HCT116 (cell line): ENCODE measurements at regions of chr16 and their contacts with region 1.

Region 1: DNA sequence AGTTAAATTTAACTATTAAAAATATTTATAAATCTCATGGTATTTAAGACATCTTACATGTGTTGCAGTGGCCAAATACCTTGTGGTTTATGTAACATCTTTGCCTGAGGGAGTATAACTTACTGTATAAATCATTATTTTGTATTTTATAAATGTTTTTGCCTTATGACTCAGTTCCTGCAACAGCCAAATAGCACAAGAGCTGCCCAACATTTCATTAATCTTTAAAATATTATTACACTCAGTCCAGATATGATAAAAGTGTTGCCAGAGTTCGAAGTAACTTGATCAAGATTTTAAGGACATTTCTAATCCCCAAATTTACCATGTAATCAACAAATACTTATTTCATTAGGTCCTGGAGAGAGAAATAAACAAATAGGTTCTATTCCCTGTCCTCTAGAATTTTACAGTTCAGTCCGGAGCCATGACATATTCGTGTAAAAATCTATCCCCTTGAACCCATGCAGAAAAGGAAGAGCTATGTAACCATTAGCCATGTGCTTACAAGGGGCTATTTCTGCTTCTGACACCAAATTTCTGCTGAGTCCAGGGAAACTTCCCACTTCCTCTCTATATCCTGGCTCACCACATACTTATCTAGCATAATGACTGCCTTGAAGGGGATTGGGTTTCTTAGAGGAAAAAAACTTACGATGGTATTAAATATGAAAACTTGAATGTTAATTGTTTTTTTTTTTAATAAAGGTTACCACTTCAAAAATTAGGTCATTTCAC is 44.0 kb downstream of the IRX6 start:
- DNase-seq: no peak
- ATAC-seq: no peak
- H3K4me3 ChIP-seq: no peak overlapping the region
- H3K27ac ChIP-seq: no peak overlapping the region
- H3K4me1 ChIP-seq: no peaks in the 10 kb centered on the region
- H3K27me3 ChIP-seq: peaks cover 74% of the 10 kb centered on the region
- CTCF ChIP-seq: no peak
- POLR2A ChIP-seq: no peak
- RAD21 ChIP-seq: no peak

Region 2: GRCh38 chr16:54890381-54890780 is 477.7 kb before region 1 on chr16:
- CTCF ChIA-PET with region 1: no interaction called
- POLR2A ChIA-PET with region 1: no interaction called
- RAD21 ChIA-PET with region 1: no interaction called
- intact Hi-C with region 1: no loop called
- DNase-seq: no peak
- ATAC-seq: no peak
- H3K4me3 ChIP-seq: no peak overlapping the region
- H3K27ac ChIP-seq: no peak overlapping the region
- H3K4me1 ChIP-seq: no peaks in the 10 kb centered on the region
- H3K27me3 ChIP-seq: no peaks in the 10 kb centered on the region
- CTCF ChIP-seq: no peak
- POLR2A ChIP-seq: no peak
- RAD21 ChIP-seq: no peak

Region 3: DNA sequence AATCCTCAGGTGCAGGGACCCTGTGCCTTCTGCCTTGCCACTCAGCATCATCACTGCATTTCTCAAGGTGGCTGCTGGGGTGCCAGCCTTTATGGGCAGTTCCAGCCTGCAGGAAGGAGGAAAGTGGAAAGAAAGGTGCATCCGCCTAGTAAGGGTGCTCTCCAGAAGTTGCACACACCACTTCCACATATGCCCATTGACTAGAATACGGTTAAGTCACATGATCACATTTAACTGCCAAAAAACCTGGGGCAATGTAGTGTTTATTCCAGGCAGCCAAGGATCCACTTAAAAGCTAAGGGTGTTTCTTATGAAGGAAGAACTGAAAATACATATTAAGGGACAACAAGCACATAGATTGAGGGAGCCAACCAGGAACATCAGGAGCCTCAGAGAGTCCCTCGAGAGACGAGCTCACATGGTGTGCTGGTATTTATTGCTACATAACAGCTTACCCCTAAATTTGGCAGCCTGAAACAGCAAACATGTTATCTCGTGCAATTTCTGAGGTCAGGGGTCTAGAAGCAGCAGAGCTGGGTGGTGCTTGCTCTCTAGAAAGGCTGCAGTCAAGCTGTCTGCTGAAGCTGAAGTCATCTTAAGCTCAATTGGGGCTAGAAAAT is 58.9 kb after region 1 on chr16:
- CTCF ChIA-PET with region 1: no interaction called
- POLR2A ChIA-PET with region 1: no interaction called
- RAD21 ChIA-PET with region 1: no interaction called
- intact Hi-C with region 1: no loop called
- DNase-seq: no peak
- ATAC-seq: no peak
- H3K4me3 ChIP-seq: no peak overlapping the region
- H3K27ac ChIP-seq: no peak overlapping the region
- H3K4me1 ChIP-seq: no peaks in the 10 kb centered on the region
- H3K27me3 ChIP-seq: peaks cover 68% of the 10 kb centered on the region
- CTCF ChIP-seq: no peak
- POLR2A ChIP-seq: no peak
- RAD21 ChIP-seq: no peak

Region 4: GRCh38 chr16:55876854-55877253 is 508.8 kb after region 1 on chr16:
- CTCF ChIA-PET with region 1: no interaction called
- POLR2A ChIA-PET with region 1: no interaction called
- RAD21 ChIA-PET with region 1: no interaction called
- intact Hi-C with region 1: no loop called
- DNase-seq: no peak
- ATAC-seq: peak; percentile 72
- H3K4me3 ChIP-seq: no peak overlapping the region
- H3K27ac ChIP-seq: no peak overlapping the region
- H3K4me1 ChIP-seq: peaks cover 0 to 5% of the 10 kb centered on the region in 2 experiments; a peak in 1 of 4 replicates
- H3K27me3 ChIP-seq: peaks cover 39% of the 10 kb centered on the region
- CTCF ChIP-seq: no peak
- POLR2A ChIP-seq: no peak
- RAD21 ChIP-seq: no peak

Region 5: DNA sequence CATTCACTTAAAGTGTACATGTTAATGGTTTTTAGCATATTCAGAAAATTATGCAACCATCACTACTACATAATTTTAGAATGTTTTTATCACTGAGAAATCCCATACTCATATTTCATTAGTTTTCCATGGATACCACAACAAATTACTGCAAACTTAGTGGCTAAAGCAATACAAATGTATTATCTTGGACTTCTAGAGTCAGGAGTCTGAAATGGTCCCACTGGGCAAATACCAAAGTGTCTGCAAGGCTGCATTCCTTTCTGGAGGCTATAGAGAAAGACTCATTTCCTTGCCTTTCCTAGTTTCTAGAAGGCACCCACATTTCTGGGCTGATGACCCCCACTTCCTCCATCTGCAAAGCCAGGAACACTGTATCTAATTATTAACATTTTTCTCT is 806.4 kb after region 1 on chr16:
- CTCF ChIA-PET with region 1: no interaction called
- POLR2A ChIA-PET with region 1: no interaction called
- RAD21 ChIA-PET with region 1: no interaction called
- intact Hi-C with region 1: loop called (anchors 10 kb)
- DNase-seq: no peak
- ATAC-seq: no peak
- H3K4me3 ChIP-seq: no peak overlapping the region
- H3K27ac ChIP-seq: no peak overlapping the region
- H3K4me1 ChIP-seq: no peaks in the 10 kb centered on the region; a peak in 1 of 4 replicates
- H3K27me3 ChIP-seq: peaks cover 5% of the 10 kb centered on the region; the same call in 1 of the 2 replicates
- CTCF ChIP-seq: no peak
- POLR2A ChIP-seq: no peak
- RAD21 ChIP-seq: no peak